Activated CD4-positive, alpha-beta T cell treated with anti-CD3 and anti-CD28 coated beads, Interleukin-2, amount 10 ng/mL, durations not matched to agents 24 days and 14 days (primary cell): ENCODE measurements at regions of chr15 and their contacts with region 1.

Region 1: DNA sequence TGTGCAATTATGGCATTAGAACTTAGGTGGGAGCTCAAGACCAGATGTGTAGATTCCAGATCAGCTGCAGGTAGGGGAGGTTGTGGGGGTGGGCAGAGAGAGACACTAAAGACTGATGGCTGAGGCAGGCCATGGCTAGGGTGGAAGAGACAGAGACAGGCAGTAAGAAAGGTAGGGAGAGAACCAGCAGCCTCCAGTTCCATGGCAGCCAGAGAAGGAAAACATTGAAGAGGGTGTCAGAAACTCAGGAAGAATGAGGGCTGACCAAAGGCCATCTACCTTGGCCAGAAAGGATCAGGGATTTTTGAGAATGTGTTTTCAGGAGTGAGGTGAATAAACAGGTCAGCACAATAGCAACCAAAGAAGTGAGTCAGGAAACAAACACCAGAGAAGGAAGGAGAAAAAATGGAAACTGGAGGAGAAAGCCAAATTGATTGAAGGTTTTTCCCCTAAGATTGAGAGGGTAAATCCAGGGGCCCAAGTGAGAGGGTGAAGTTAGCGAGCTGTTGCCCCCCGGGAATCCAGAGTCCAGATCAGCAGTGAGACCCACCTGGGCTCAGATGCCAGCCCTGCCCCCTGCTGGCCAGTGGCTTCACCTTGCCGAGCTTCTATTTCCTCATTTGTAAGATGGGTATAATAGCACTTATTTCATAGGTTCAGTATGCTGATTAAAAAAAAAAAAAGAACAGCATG is 41.0 kb downstream of the ABHD2 start:
- DNase-seq: peak; percentile 83
- H3K4me3 Mint-ChIP-seq: no peak overlapping the region
- H3K27ac Mint-ChIP-seq: no peak overlapping the region
- H3K4me1 Mint-ChIP-seq: peaks cover 21% of the 10 kb centered on the region
- H3K27me3 Mint-ChIP-seq: no peaks in the 10 kb centered on the region

Region 2: DNA sequence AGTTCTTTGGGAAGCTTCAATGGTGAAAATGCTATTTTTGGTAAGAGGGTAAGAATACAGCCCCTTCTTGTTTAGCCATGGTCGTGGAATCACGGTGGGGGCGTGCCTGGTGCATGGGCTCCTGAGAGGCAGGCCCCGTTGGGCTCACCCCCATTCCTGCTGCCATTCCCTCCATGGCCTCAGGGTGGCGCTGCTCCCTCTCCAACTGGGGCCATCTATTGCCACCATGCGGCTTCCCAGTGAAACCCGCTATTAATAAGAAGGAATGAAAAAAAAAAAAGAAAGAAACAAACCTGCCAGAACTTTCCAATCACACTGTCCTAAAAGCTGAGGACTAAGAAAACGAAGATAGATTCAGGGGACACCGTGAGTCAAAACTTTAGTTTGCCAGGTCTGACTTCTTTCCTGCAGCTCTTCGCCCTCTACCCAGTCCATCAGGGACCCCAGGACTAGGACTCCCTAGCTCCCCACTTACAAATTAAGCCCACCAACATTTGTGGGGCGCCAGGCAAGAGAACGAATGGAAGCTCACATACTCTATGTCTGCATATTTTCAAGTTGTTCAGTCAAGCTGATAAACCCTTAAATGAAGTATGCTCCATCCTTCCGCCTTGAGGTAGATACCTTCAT is 71.7 kb before region 1 on chr15:
- intact Hi-C with region 1: loop called (anchors 1 kb)
- DNase-seq: peak; percentile 95
- H3K4me3 Mint-ChIP-seq: no peak overlapping the region
- H3K27ac Mint-ChIP-seq: no peak overlapping the region
- H3K4me1 Mint-ChIP-seq: peaks cover 8% of the 10 kb centered on the region
- H3K27me3 Mint-ChIP-seq: peaks cover 2% of the 10 kb centered on the region